ENCODE measurements at regions of chr3 and their contacts with region 1.

Region 1: DNA sequence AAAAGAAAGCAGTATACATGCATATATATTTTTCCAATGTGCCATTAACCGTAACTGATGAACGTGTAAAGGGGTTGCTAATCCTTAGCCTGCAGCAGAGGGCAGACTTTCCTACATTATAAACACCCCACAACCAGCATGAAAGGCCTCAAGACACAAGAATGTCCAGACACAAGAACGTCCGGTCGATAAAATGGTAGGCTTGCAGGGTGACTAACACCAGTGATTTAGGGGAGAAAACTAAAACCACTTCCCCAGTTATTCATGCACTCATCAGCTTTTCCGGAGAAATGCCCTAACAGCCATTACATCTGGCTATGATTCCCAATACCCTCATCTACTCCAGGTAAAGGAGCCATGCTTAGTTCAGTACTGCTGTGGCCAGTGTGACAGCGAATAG is 57.4 kb downstream of the LRTM1 start:
- DNase-seq: no peak
- H3K4me3 ChIP-seq: no peak overlapping the region
- H3K27ac ChIP-seq: no peak overlapping the region
- H3K4me1 ChIP-seq: peaks cover 0 to 22% (median 8%) of the 10 kb centered on the region in 4 donors
- H3K27me3 ChIP-seq: no peaks in the 10 kb centered on the region
- CTCF ChIP-seq: peak; percentile 59 to 73 (median 65)
- EP300 ChIP-seq: no peak
- POLR2A ChIP-seq: no peak

Region 2: GRCh38 chr3:54578417-54578816 is 292.0 kb before region 1 on chr3:
- intact Hi-C with region 1: no loop called
- DNase-seq: peak; percentile 83
- H3K4me3 ChIP-seq: no peak overlapping the region
- H3K27ac ChIP-seq: no peak overlapping the region
- H3K4me1 ChIP-seq: no peaks in the 10 kb centered on the region
- H3K27me3 ChIP-seq: no peaks in the 10 kb centered on the region
- CTCF ChIP-seq: no peak
- EP300 ChIP-seq: no peak
- POLR2A ChIP-seq: no peak

Region 3: DNA sequence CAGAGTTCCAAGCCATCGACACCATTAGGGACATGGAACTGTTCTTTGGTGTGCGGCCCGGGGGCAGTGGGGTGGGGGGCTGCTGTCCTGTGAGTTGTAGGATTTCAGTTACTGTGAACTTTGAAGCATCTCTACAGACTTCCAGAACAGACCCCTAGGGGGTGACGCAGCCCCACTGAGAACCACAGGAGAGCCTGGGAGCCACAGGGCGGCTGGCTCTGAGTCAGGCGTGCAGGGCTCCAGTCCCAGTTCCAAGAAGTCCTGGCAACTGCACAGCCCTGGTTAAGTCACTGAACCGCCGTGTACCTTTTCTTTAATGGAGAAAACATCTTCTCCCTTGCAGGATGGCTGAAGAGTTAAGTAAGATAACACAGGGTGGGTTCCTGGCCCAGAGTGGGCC is 81.0 kb after region 1 on chr3:
- intact Hi-C with region 1: loop called (anchors 5 kb)
- DNase-seq: no peak
- H3K4me3 ChIP-seq: no peak overlapping the region
- H3K27ac ChIP-seq: no peak overlapping the region
- H3K4me1 ChIP-seq: peaks cover 10 to 44% (median 40%) of the 10 kb centered on the region in 4 donors
- H3K27me3 ChIP-seq: no peaks in the 10 kb centered on the region
- CTCF ChIP-seq: peak; percentile 60 to 77 (median 67)
- EP300 ChIP-seq: no peak
- POLR2A ChIP-seq: no peak

Region 4: GRCh38 chr3:55189359-55189801 is 319.0 kb after region 1 on chr3:
- intact Hi-C with region 1: loop called (anchors 5 kb)
- DNase-seq: peak; percentile 14
- H3K4me3 ChIP-seq: no peak overlapping the region
- H3K27ac ChIP-seq: no peak overlapping the region
- H3K4me1 ChIP-seq: peaks cover 0 to 10% (median 7%) of the 10 kb centered on the region in 4 donors
- H3K27me3 ChIP-seq: no peaks in the 10 kb centered on the region
- CTCF ChIP-seq: no peak
- EP300 ChIP-seq: no peak
- POLR2A ChIP-seq: no peak